Posterior vena cava (tissue), 2 donors: ENCODE measurements at regions of chr16 and their contacts with region 1.

Region 1: DNA sequence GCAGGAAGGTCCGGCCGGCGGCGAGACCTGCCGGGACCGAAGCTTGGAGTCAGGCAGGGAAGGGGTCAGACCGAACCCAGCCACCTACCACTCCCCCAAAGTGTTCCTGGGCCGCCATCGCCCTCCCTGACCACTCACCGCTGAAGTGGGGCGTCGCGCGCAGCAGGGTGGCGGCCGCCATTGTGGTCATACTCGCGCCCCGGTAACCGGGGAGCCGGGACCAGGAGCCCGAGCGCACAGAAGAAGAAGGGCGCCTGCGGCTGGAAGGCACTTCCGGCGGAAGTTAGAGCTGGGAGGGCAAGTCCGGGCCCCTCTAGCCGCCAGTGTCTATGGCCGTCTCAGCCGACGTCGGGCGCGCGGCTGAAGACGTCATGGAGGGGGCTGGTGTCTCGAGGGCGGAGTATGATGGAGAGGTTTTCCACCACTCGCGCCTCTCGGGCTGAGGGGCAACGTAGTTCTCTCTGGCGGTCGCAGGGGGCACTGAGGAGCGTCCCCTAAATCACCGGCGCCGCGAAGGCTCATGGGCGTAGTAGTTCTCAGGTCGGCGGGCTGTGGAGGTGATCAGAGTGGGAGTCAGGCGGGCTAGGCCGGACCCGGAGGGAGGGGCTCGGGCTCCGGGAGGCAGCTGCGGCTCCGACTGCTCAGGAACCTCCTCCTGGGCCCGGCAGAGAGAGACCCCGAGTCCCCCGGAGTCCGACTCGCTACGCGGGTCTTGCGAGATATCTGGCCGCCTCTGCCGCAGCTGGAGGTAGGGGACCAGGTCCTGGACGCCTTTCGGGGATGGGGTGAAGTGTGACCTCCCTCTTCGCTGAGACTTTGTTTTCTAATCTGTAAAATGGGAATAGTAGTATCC is at the start of gene TUFM:
- DNase-seq: peak; percentile 99
- total RNA-seq, gene TUFM: 74.4 to 76.2 TPM

Region 2: GRCh38 chr16:28820016-28820415 is 26.3 kb before region 1 on chr16:
- intact Hi-C with region 1: no loop called
- DNase-seq: peak; percentile 44

Region 3: GRCh38 chr16:28863929-28864793 is 17.9 kb after region 1 on chr16:
- intact Hi-C with region 1: loop called in 1 of 2 experiments (anchors 2 kb)
- DNase-seq: no peak

Region 4: DNA sequence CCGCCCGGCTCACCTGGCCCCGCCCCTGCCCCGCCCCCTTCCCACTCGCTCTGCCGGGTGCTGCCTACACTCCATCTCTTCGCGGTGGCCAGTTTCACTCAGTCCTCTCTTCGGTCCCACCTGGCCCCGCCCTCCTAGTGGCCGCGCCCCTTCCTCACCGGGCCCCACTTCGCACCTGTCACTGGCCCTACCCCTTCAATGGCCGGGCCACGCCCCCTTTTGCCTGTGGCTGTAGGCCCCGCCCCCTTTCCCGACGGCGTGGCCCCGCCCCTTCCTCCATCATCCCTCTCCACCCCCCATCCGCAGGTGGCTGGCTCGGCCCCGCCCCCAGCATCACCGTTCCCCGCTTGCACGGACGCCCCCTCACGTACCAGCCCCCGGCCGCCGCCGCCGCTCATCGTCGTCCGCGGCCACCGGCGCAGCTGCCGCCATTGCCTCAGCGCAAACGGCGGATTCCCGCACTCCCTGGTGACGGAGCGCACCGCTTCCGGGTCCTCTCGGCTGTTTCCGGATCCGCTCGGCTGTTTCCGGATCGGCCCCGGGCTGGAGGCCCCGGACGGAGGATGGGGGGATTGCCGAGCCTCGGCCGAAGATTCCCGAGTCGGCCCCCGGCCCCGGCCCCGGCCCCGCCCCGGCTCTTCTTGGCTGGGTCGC is 78.6 kb after region 1 on chr16 and contains the start of gene RABEP2:
- intact Hi-C with region 1: no loop called
- DNase-seq: peak; percentile 98
- total RNA-seq, gene RABEP2: 10.3 to 13.7 TPM